T-cell (primary cell): ENCODE measurements at regions of chr2 and their contacts with region 1.

Region 1: GRCh38 chr2:65129826-65130663 is at the start of gene RAB1A:
- DNase-seq: peak; percentile 96 to 100 (median 99)
- ATAC-seq: peak; percentile 92 to 95 (median 94)
- H3K4me3 ChIP-seq: peak within 1 kb of the TSS; percentile 92 to 96
- H3K4me3 Mint-ChIP-seq: peak within 1 kb of the TSS; percentile 95 to 100 (median 100)
- H3K27ac ChIP-seq: peak within 1 kb of the TSS; percentile 90
- H3K27ac Mint-ChIP-seq: peak within 1 kb of the TSS; percentile 99 to 100
- H3K4me1 ChIP-seq: peaks cover 24 to 29% of the 10 kb centered on the region in 2 experiments
- H3K4me1 Mint-ChIP-seq: peaks cover 39 to 48% (median 43%) of the 10 kb centered on the region in 3 donors
- H3K27me3 ChIP-seq: no peaks in the 10 kb centered on the region
- H3K27me3 Mint-ChIP-seq: no peaks in the 10 kb centered on the region
- total RNA-seq, gene RAB1A: 39.1 to 54.3 (median 42.6) TPM

Region 2: DNA sequence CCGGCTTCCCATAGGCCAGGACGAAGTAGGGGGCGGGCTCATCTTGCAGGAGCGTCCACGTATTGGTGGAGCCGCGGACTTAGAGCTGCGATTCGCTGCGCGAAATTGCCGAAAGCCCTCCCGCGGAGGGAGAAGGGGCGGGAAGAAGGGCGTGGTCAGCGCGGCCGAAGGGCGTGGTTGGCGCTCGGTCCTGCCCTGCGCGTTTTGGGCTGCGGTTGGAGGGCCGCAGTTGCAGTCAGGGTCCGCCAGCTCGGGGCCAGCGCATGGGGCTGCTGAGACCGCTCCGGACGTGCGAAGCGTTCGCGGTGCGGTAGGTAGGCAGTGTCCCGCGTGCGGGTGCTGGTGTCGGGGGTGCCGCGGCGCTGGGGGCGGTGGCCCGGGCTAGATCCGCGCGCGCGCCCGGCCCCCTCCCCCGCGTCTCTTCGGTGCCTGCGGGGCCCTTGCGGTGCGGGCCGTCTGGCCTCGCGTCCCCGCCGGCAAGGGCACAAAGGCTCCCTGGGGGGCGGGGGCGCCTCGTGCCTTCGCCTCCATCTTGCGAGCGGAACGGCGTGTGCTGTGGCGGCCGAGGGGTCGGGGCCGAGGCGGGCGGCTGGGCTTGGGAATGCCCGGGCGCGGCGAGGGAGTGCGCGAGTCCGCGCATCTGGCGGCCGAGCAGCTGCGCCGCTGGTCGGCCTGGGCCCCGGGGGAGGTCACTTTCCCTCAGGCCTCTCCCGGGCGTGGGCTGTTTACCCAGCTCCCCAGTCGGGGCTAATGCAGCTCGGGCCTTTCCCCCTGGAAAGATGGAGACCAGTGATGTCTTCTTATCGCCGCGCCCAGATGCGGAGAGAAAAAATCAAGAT is 73.6 kb before region 1 on chr2 and contains the start of gene CEP68:
- CTCF ChIA-PET with region 1: interaction called, 3 to 34 read pairs
- POLR2A ChIA-PET with region 1: interaction called, 3 to 8 read pairs
- DNase-seq: peak; percentile 90 to 97 (median 94)
- ATAC-seq: peak; percentile 90 to 93 (median 90)
- H3K4me3 ChIP-seq: peak within 1 kb of the TSS; percentile 52 to 86
- H3K4me3 Mint-ChIP-seq: peak within 1 kb of the TSS; percentile 95 to 97 (median 96)
- H3K27ac ChIP-seq: peak within 1 kb of the TSS; percentile 63
- H3K27ac Mint-ChIP-seq: peak within 1 kb of the TSS; percentile 92 to 94
- H3K4me1 ChIP-seq: peaks cover 20 to 59% of the 10 kb centered on the region in 2 experiments
- H3K4me1 Mint-ChIP-seq: peaks cover 70 to 74% (median 72%) of the 10 kb centered on the region in 3 donors
- H3K27me3 ChIP-seq: no peaks in the 10 kb centered on the region
- H3K27me3 Mint-ChIP-seq: no peaks in the 10 kb centered on the region
- total RNA-seq, gene CEP68: 24.1 to 41.4 (median 37.4) TPM

Region 3: DNA sequence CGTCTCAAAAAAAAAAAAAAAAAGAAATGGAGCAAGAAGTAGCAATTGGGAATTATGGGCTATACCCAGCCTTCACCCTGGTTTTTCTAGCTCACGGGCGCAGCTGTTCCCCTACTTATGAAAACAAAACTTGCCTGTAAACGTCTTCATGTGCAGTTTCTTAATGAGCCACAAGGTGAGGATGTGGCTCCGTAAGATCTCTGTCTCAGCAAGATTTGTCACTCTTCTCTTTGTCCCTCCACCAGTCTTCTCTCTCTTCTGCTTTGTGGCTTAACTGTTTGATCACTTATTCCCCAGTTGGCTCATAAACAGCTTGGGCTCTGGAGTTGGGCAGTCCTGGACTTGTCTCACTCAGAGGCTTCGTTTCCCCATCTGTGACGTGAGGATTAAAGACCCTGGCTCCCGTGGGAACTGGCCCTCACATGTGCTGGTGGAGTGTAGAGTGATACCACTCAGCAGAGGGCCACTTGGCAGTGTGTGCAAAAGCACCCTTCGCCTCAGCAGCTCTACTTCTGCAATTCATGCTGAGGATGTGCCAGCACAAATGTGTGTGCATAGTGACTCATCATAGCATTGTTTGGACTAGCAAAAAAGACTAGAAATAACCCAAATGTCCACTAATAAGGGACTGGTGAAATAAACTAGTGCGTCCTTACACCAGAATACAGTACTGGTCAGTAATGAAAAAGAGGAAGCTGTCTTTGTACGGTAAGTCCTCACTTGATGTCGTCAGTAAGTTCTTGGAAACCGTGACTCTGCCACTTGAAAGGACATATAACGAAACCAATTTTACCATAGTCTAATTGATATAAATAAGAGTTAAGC is 65.1 kb before region 1 on chr2:
- CTCF ChIA-PET with region 1: interaction called, 8 to 12 read pairs
- POLR2A ChIA-PET with region 1: interaction called in 1 of 2 experiments, 6 read pairs
- DNase-seq: peak in 30 of 35 experiments; percentile 10 to 81 (median 34)
- ATAC-seq: peak; percentile 69 to 85 (median 72)
- H3K4me3 ChIP-seq: no peak overlapping the region
- H3K4me3 Mint-ChIP-seq: peak overlapping the region in 1 of 3 donors; percentile 49
- H3K27ac ChIP-seq: no peak overlapping the region
- H3K27ac Mint-ChIP-seq: peak overlapping the region in 1 of 2 donors; percentile 71
- H3K4me1 ChIP-seq: peaks cover 0 to 37% of the 10 kb centered on the region in 2 experiments
- H3K4me1 Mint-ChIP-seq: peaks cover 47 to 68% (median 67%) of the 10 kb centered on the region in 3 donors
- H3K27me3 ChIP-seq: no peaks in the 10 kb centered on the region
- H3K27me3 Mint-ChIP-seq: no peaks in the 10 kb centered on the region

Region 4: GRCh38 chr2:65103013-65103715 is 26.9 kb before region 1 on chr2:
- CTCF ChIA-PET with region 1: interaction called in 1 of 2 experiments, 4 read pairs
- POLR2A ChIA-PET with region 1: interaction called, 6 to 12 read pairs
- DNase-seq: no peak
- ATAC-seq: no peak
- H3K4me3 ChIP-seq: no peak overlapping the region
- H3K4me3 Mint-ChIP-seq: no peak overlapping the region
- H3K27ac ChIP-seq: no peak overlapping the region
- H3K27ac Mint-ChIP-seq: no peak overlapping the region
- H3K4me1 ChIP-seq: peaks cover 0 to 5% of the 10 kb centered on the region in 2 experiments
- H3K4me1 Mint-ChIP-seq: peaks cover 30 to 42% (median 35%) of the 10 kb centered on the region in 3 donors
- H3K27me3 ChIP-seq: no peaks in the 10 kb centered on the region
- H3K27me3 Mint-ChIP-seq: no peaks in the 10 kb centered on the region

Region 5: DNA sequence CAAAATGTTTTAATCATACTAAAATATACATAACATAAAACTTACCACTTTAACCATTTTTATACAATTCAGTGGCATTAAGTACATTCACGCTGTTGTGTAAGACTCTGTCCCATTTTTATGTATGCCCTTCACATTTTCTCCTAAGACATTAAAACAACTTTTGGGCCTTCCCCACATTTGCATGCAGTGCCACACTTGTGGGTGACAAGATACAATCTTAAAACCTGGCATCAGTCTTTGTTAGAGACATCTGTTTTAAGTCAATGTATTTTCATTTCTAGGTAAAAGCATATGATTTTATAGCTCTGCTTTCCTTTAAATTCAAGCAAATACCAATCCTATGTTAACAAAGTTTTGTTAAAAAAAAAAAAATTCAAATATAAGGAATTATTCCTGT is 285.0 kb after region 1 on chr2:
- CTCF ChIA-PET with region 1: no interaction called
- POLR2A ChIA-PET with region 1: interaction called in 1 of 2 experiments, 18 read pairs
- DNase-seq: no peak
- ATAC-seq: no peak
- H3K4me3 ChIP-seq: no peak overlapping the region
- H3K4me3 Mint-ChIP-seq: no peak overlapping the region
- H3K27ac ChIP-seq: no peak overlapping the region
- H3K27ac Mint-ChIP-seq: no peak overlapping the region
- H3K4me1 ChIP-seq: peaks cover 4 to 9% of the 10 kb centered on the region in 2 experiments
- H3K4me1 Mint-ChIP-seq: peaks cover 13 to 22% (median 19%) of the 10 kb centered on the region in 3 donors
- H3K27me3 ChIP-seq: no peaks in the 10 kb centered on the region
- H3K27me3 Mint-ChIP-seq: no peaks in the 10 kb centered on the region